ENCODE measurements at regions of chr3 and their contacts with region 1.

Region 1: GRCh38 chr3:143224716-143225115 is 105.1 kb downstream of the CHST2 start:
- DNase-seq: no peak

Region 2: GRCh38 chr3:143291836-143292447 is 67.2 kb after region 1 on chr3:
- intact Hi-C with region 1: loop called (anchors 2 kb)
- DNase-seq: no peak